Right ventricle myocardium inferior (tissue), 1 donor: ENCODE measurements at regions of chr13 and their contacts with region 1.

Region 1: DNA sequence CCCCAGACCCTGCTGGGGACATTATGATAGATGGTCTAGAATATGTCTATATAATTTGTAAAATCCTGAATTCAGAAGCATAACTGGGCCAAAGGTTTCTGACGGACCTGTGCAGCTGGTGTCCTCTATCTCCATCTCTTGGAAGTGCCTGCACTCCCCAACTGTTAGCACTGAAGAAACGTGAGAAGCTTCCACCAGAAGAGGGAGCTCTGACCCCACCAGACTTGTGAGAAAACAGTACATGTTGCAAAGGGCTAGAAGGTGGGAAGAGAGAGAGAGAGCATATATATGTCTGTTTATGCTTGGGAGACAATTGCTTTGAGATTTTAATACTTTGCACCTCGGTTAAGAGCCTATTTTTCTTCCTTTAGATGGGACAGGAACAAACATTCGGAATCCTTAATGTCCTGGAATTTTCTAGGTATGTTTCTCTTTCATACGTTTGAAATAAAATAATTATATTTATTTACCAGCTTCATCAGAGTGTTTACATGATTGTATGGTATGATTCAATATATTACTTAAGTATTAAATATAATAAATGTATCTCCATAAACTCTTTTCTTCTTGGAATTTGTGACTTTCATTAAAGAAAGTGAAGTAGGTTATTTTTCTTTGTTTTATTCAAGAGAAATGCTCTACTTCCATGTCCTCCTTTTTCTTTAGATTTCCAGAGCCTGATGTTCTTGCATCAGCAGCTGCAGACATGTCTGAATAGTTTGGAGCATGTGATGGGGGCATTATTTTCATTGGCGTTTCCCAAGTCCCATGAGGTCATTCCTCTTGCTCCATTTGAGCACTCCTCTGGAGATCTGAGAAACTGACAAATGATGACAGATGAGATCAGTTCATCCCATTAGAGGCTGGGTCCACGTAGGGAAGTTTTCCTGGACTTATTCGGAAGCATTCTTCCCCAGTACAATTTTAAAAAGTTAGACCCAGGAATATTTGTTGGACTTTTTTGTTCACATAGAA is 202.9 kb downstream of the ATP8A2 start:
- DNase-seq: no peak
- ATAC-seq: peak; percentile 80

Region 2: GRCh38 chr13:26062844-26063444 is 488.2 kb after region 1 on chr13:
- intact Hi-C with region 1: loop called (anchors 2 kb)
- DNase-seq: no peak
- ATAC-seq: peak; percentile 85